ENCODE measurements at regions of chr9 and their contacts with region 1.

Region 1: GRCh38 chr9:20622330-20623020 is at the start of gene MLLT3:
- DNase-seq: peak; percentile 95 to 97 (median 97)
- H3K4me3 ChIP-seq: peak within 1 kb of the TSS; percentile 68 to 93
- H3K4me3 Mint-ChIP-seq: peak within 1 kb of the TSS; percentile 95 to 100 (median 99)
- H3K27ac ChIP-seq: peak within 1 kb of the TSS; percentile 69
- H3K27ac Mint-ChIP-seq: peak within 1 kb of the TSS; percentile 96 to 99 (median 98)
- H3K4me1 ChIP-seq: peaks cover 42% of the 10 kb centered on the region
- H3K4me1 Mint-ChIP-seq: peaks cover 35 to 71% (median 40%) of the 10 kb centered on the region in 4 donors
- H3K27me3 ChIP-seq: no peaks in the 10 kb centered on the region
- H3K27me3 Mint-ChIP-seq: peaks cover 0 to 2% of the 10 kb centered on the region in 2 donors
- total RNA-seq, gene MLLT3: 52.5 to 54.4 TPM

Region 2: DNA sequence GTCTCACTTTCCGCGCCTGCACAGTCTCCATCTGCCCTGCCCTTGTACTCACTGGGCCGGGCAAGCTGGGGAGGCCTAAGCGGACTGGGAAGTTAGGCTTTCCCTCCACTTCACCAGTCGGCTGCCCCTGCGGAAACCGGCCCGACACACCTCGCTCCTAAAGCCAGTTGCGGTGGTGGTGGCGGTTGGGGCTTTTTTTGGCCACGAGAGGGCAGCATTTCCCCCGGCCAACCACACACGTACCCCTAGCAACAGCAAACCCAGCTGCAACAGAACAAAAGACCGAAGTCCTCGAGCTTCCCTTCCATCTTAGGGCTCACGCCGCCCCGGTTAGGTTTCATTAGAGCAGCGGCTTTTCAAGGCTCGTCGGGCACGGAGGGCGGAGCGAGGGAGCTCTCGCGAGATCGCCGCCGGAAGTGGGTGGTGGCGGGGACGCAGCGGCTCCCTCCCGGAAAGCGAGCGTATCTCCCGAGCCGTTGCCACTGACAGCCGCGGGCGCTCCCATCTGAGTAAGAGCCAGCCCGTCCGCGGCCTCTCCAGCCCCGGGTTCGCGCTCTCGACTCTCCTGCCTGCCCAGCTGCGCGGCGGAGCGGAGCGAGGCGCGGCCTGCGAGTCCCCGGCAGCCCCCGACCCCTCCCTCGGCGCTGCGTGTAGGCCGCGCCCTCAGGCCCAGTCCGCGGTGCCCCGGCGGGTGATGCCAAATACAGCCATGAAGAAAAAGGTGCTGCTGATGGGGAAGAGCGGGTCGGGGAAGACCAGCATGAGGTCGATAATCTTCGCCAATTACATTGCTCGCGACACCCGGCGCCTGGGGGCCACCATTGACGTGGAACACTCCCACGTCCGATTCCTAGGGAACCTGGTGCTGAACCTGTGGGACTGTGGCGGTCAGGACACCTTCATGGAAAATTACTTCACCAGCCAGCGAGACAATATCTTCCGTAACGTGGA is 1573.2 kb before region 1 on chr9 and contains the start of gene RRAGA:
- CTCF ChIA-PET with region 1: no interaction called
- POLR2A ChIA-PET with region 1: no interaction called
- intact Hi-C with region 1: loop called (anchors 2 kb)
- DNase-seq: peak; percentile 94 to 96 (median 95)
- H3K4me3 ChIP-seq: peak within 1 kb of the TSS; percentile 84 to 96
- H3K4me3 Mint-ChIP-seq: peak within 1 kb of the TSS; percentile 91 to 99 (median 96)
- H3K27ac ChIP-seq: peak within 1 kb of the TSS; percentile 87
- H3K27ac Mint-ChIP-seq: peak within 1 kb of the TSS; percentile 96 to 100 (median 99)
- H3K4me1 ChIP-seq: peaks cover 39% of the 10 kb centered on the region
- H3K4me1 Mint-ChIP-seq: peaks cover 21 to 56% (median 40%) of the 10 kb centered on the region in 4 donors
- H3K27me3 ChIP-seq: no peaks in the 10 kb centered on the region
- H3K27me3 Mint-ChIP-seq: no peaks in the 10 kb centered on the region
- total RNA-seq, gene RRAGA: 57.4 to 58.0 TPM

Region 3: GRCh38 chr9:20043035-20043434 is 579.4 kb before region 1 on chr9:
- CTCF ChIA-PET with region 1: no interaction called
- POLR2A ChIA-PET with region 1: no interaction called
- intact Hi-C with region 1: loop called (anchors 5 kb)
- DNase-seq: peak in 4 of 5 donors; percentile 18 to 38 (median 24)
- H3K4me3 ChIP-seq: peak overlapping the region; percentile 43 to 64
- H3K4me3 Mint-ChIP-seq: peak overlapping the region; percentile 68 to 90 (median 82)
- H3K27ac ChIP-seq: peak overlapping the region; percentile 37
- H3K27ac Mint-ChIP-seq: peak overlapping the region; percentile 78 to 95 (median 87)
- H3K4me1 ChIP-seq: peaks cover 24% of the 10 kb centered on the region
- H3K4me1 Mint-ChIP-seq: peaks cover 17 to 44% (median 24%) of the 10 kb centered on the region in 4 donors
- H3K27me3 ChIP-seq: no peaks in the 10 kb centered on the region
- H3K27me3 Mint-ChIP-seq: no peaks in the 10 kb centered on the region

Region 4: GRCh38 chr9:20356403-20357035 is 266.0 kb before region 1 on chr9:
- CTCF ChIA-PET with region 1: no interaction called
- POLR2A ChIA-PET with region 1: no interaction called
- intact Hi-C with region 1: loop called (anchors 2 kb)
- DNase-seq: peak; percentile 34 to 51 (median 42)
- H3K4me3 ChIP-seq: no peak overlapping the region
- H3K4me3 Mint-ChIP-seq: no peak overlapping the region
- H3K27ac ChIP-seq: no peak overlapping the region
- H3K27ac Mint-ChIP-seq: peak overlapping the region in 5 of 7 donors; percentile 5 to 82 (median 68)
- H3K4me1 ChIP-seq: peaks cover 9% of the 10 kb centered on the region
- H3K4me1 Mint-ChIP-seq: peaks cover 13 to 55% (median 24%) of the 10 kb centered on the region in 4 donors
- H3K27me3 ChIP-seq: no peaks in the 10 kb centered on the region
- H3K27me3 Mint-ChIP-seq: no peaks in the 10 kb centered on the region

Region 5: GRCh38 chr9:20611751-20612287 is 10.7 kb before region 1 on chr9:
- CTCF ChIA-PET with region 1: interaction called, 5 read pairs
- POLR2A ChIA-PET with region 1: interaction called, 20 read pairs
- intact Hi-C with region 1: loop called (anchors 1 kb)
- DNase-seq: no peak
- H3K4me3 ChIP-seq: no peak overlapping the region
- H3K4me3 Mint-ChIP-seq: peak overlapping the region in 1 of 8 donors; percentile 0
- H3K27ac ChIP-seq: no peak overlapping the region
- H3K27ac Mint-ChIP-seq: peak overlapping the region in 1 of 7 donors; percentile 26
- H3K4me1 ChIP-seq: peaks cover 60% of the 10 kb centered on the region
- H3K4me1 Mint-ChIP-seq: peaks cover 42 to 73% (median 60%) of the 10 kb centered on the region in 4 donors
- H3K27me3 ChIP-seq: no peaks in the 10 kb centered on the region
- H3K27me3 Mint-ChIP-seq: no peaks in the 10 kb centered on the region

Region 6: GRCh38 chr9:20684035-20684872 is 61.8 kb after region 1 on chr9 and contains the start of gene FOCAD:
- CTCF ChIA-PET with region 1: interaction called, 15 read pairs
- POLR2A ChIA-PET with region 1: interaction called, 61 read pairs
- intact Hi-C with region 1: loop called (anchors 1 kb)
- DNase-seq: peak; percentile 94 to 96 (median 96)
- H3K4me3 ChIP-seq: peak within 1 kb of the TSS; percentile 86 to 96
- H3K4me3 Mint-ChIP-seq: peak within 1 kb of the TSS; percentile 90 to 96 (median 94)
- H3K27ac ChIP-seq: peak within 1 kb of the TSS; percentile 80
- H3K27ac Mint-ChIP-seq: peak within 1 kb of the TSS; percentile 83 to 95 (median 90)
- H3K4me1 ChIP-seq: peaks cover 22% of the 10 kb centered on the region
- H3K4me1 Mint-ChIP-seq: peaks cover 11 to 20% (median 16%) of the 10 kb centered on the region in 4 donors
- H3K27me3 ChIP-seq: no peaks in the 10 kb centered on the region
- H3K27me3 Mint-ChIP-seq: no peaks in the 10 kb centered on the region
- total RNA-seq, gene FOCAD: 18.8 to 20.6 TPM

Region 7: DNA sequence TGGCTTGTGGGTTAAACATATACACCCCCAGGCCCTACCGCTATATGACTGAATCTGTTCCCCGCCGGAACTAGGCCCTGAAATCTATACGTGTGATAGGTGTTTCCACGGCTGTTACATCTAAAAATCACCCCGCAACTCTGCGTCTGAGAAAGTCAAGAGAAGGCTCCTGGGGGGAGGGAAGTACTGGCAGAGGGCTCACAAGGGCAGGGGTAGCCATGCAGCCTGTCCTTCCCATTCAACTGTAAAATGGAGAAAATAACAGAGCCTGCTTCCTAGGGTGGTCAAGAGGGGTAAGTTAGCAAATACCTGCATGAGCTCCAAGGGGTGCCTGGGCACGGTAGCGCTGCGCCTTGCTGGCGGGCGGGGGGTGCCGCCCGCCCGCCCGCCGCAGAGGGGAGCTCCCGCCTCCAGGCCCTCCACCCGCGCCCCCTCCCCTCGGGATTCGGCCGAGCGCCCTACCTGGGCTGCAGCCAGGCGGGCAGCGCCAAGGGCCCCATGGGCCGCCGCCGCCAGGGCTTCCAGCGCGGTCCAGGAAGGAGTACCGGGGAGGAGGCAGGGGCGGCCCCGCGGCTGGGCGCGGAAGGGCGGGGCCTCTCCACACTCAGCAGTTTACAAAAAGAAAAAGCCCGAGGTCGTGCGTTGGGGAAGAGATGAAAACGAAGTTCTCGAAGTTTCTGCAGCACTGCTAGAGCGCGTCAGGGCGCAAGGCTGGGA is 408.8 kb after region 1 on chr9 and contains the start of gene HACD4:
- CTCF ChIA-PET with region 1: interaction called, 6 read pairs
- POLR2A ChIA-PET with region 1: interaction called, 18 read pairs
- intact Hi-C with region 1: loop called (anchors 1 kb)
- DNase-seq: peak; percentile 69 to 77 (median 74)
- H3K4me3 ChIP-seq: peak within 1 kb of the TSS; percentile 74 to 85
- H3K4me3 Mint-ChIP-seq: peak within 1 kb of the TSS in 6 of 8 donors; percentile 79 to 85 (median 81)
- H3K27ac ChIP-seq: peak within 1 kb of the TSS; percentile 64
- H3K27ac Mint-ChIP-seq: peak within 1 kb of the TSS in 6 of 7 donors; percentile 76 to 93 (median 86)
- H3K4me1 ChIP-seq: peaks cover 44% of the 10 kb centered on the region
- H3K4me1 Mint-ChIP-seq: peaks cover 21 to 33% (median 27%) of the 10 kb centered on the region in 4 donors
- H3K27me3 ChIP-seq: no peaks in the 10 kb centered on the region
- H3K27me3 Mint-ChIP-seq: no peaks in the 10 kb centered on the region
- total RNA-seq, gene HACD4: 16.0 to 18.3 TPM